Psoas muscle (tissue), 8 donors: ENCODE measurements at regions of chr6 and their contacts with region 1.

Region 1: GRCh38 chr6:166633732-166634535 is 6.9 kb upstream of the RPS6KA2 start:
- DNase-seq: peak; percentile 62 to 85
- ATAC-seq: peak; percentile 93 to 96 (median 94)
- H3K4me3 ChIP-seq: no peak overlapping the region
- H3K27ac ChIP-seq: peak overlapping the region; percentile 81
- H3K4me1 ChIP-seq: peaks cover 42% of the 10 kb centered on the region
- H3K27me3 ChIP-seq: no peaks in the 10 kb centered on the region
- CTCF ChIP-seq: no peak

Region 2: DNA sequence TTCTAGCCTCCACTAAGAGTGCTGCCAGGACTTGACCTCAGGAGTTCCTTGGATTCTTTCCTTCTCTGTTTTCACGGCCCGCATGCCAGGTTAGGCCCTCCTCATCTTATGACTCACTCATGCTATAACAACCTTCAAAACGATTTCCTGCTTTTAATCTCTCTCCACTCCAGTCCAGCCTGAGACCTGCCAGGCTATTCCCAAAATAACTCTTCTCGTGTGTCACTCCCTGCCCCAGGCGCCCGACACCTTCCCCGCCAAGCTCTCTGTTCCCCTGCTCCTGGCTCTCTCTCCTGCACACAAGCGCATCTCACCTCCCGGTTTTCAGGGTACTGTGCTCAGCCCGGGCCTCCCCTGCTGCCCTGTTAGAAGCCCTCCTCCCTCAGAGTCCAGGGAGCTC is 57.3 kb after region 1 on chr6:
- intact Hi-C with region 1: loop called (anchors 2 to 5 kb)
- DNase-seq: peak; percentile 52 to 86
- ATAC-seq: peak; percentile 87 to 91 (median 90)
- H3K4me3 ChIP-seq: peak overlapping the region; percentile 63
- H3K27ac ChIP-seq: peak overlapping the region; percentile 98
- H3K4me1 ChIP-seq: peaks cover 31% of the 10 kb centered on the region
- H3K27me3 ChIP-seq: no peaks in the 10 kb centered on the region
- CTCF ChIP-seq: no peak

Region 3: GRCh38 chr6:166775180-166776081 is 141.5 kb after region 1 on chr6:
- intact Hi-C with region 1: no loop called
- DNase-seq: no peak
- ATAC-seq: peak; percentile 44 to 77 (median 68)
- H3K4me3 ChIP-seq: no peak overlapping the region
- H3K27ac ChIP-seq: no peak overlapping the region
- H3K4me1 ChIP-seq: no peaks in the 10 kb centered on the region
- H3K27me3 ChIP-seq: peaks cover 0 to 11% (median 0%) of the 10 kb centered on the region in 3 donors
- CTCF ChIP-seq: peak; percentile 81